ENCODE measurements at regions of chr22 and their contacts with region 1.

Region 1: GRCh38 chr22:37316875-37317371 is 34.6 kb downstream of the CYTH4 start:
- DNase-seq: peak; percentile 51
- H3K4me3 Mint-ChIP-seq: no peak overlapping the region
- H3K27ac Mint-ChIP-seq: no peak overlapping the region
- H3K4me1 Mint-ChIP-seq: peaks cover 45% of the 10 kb centered on the region
- H3K27me3 Mint-ChIP-seq: peaks cover 17% of the 10 kb centered on the region

Region 2: GRCh38 chr22:36757668-36758211 is 559.2 kb before region 1 on chr22:
- intact Hi-C with region 1: no loop called
- DNase-seq: peak; percentile 63
- H3K4me3 Mint-ChIP-seq: no peak overlapping the region
- H3K27ac Mint-ChIP-seq: no peak overlapping the region
- H3K4me1 Mint-ChIP-seq: no peaks in the 10 kb centered on the region
- H3K27me3 Mint-ChIP-seq: peaks cover 8% of the 10 kb centered on the region

Region 3: GRCh38 chr22:36966851-36967540 is 349.9 kb before region 1 on chr22:
- intact Hi-C with region 1: no loop called
- DNase-seq: no peak
- H3K4me3 Mint-ChIP-seq: no peak overlapping the region
- H3K27ac Mint-ChIP-seq: no peak overlapping the region
- H3K4me1 Mint-ChIP-seq: no peaks in the 10 kb centered on the region
- H3K27me3 Mint-ChIP-seq: peaks cover 14% of the 10 kb centered on the region

Region 4: GRCh38 chr22:37098976-37099591 is 217.8 kb before region 1 on chr22:
- intact Hi-C with region 1: no loop called
- DNase-seq: no peak
- H3K4me3 Mint-ChIP-seq: no peak overlapping the region
- H3K27ac Mint-ChIP-seq: no peak overlapping the region
- H3K4me1 Mint-ChIP-seq: peaks cover 52% of the 10 kb centered on the region
- H3K27me3 Mint-ChIP-seq: peaks cover 6% of the 10 kb centered on the region

Region 5: GRCh38 chr22:37267135-37267587 is 49.8 kb before region 1 on chr22:
- intact Hi-C with region 1: loop called (anchors 1 kb)
- DNase-seq: peak; percentile 74
- H3K4me3 Mint-ChIP-seq: peak overlapping the region; percentile 86
- H3K27ac Mint-ChIP-seq: peak overlapping the region; percentile 96
- H3K4me1 Mint-ChIP-seq: peaks cover 24% of the 10 kb centered on the region
- H3K27me3 Mint-ChIP-seq: peaks cover 4% of the 10 kb centered on the region

Region 6: DNA sequence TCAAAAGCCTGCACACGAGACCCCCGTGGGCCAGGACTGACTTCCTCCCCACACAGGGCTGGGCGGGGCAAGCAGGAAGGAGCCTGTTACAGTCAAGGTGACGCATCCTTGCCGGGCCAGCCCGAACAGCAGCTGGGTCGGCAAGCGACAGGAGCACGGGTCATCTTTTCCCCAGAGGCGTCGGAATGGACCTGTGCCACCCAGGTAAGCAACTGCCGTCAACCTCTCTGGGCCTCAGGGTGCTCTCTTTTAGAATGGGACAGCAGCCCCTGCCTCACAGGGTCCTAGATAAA is 34.6 kb before region 1 on chr22 and contains the start of gene CYTH4:
- intact Hi-C with region 1: loop called (anchors 1 kb)
- DNase-seq: peak; percentile 74
- H3K4me3 Mint-ChIP-seq: peak within 1 kb of the TSS; percentile 88
- H3K27ac Mint-ChIP-seq: peak within 1 kb of the TSS; percentile 99
- H3K4me1 Mint-ChIP-seq: peaks cover 65% of the 10 kb centered on the region
- H3K27me3 Mint-ChIP-seq: no peaks in the 10 kb centered on the region
- total RNA-seq, gene CYTH4: 49.5 and 57.1 TPM in 2 replicates

Region 7: DNA sequence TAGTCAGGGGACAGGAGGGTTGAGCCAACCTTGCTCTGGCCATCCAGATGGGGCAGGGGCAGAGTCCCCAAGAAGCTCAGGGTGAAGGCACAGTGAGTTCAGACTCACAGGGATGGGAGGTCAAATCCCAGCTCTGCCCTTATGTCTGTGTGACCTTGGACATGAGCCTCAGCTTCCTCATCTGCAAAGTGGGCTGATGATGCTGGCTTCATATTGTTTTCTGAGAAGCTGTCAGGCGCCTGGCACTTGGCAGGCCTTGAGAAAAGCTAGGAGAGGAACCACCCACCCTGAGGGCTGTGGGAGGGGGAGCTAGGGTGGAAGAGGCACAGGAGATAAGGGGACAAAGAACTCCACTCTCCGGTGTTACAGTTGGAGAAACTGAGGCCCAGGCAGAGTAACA is 11.0 kb before region 1 on chr22:
- intact Hi-C with region 1: loop called (anchors 1 kb)
- DNase-seq: no peak
- H3K4me3 Mint-ChIP-seq: no peak overlapping the region
- H3K27ac Mint-ChIP-seq: peak overlapping the region; percentile 100
- H3K4me1 Mint-ChIP-seq: peaks cover 83% of the 10 kb centered on the region
- H3K27me3 Mint-ChIP-seq: no peaks in the 10 kb centered on the region

Region 8: DNA sequence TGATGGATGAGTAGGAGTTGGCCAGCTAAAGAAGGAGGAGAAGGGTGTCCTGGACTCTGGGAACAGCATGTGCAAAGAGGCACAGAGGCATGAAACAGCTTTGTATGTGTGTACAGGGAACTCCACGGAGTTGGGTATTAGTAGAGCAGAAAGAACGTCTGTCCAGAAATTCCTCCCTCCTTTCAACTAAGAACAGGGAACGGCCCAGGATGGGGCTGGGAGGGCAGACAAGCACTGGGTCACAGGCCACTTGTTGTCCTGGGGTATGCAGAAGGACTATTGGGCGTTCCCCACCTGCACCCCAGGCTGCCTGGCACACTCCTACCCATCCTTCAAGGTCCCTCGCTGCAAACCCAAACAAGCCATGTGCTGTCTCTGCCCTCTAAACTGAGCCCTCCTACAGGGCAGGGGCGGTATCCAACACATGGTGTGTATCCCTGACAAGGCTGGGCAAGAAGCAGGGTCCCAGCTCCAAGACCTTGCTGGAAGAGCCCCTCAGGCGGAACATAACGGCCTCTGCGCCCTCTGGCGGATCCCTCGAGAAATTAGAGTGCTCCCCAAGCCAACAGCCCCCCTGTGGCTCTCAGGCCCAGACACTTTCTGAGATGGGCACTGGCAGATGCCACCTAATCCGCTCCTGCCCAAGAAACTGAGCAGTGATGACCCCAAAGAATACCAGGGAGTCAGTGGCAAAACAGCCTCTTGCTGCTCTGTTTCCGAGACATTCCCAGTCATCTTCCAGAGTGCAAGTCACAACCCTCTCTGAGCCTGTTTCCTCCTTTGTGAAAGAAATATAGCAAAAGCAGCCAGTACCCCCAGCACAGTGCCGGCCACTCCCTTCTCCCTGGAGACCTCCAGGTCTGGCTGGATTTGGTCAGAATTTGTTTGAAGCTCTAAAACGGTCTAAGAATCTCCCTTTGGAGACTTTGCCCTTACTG is 112.0 kb after region 1 on chr22:
- intact Hi-C with region 1: loop called (anchors 1 kb)
- DNase-seq: peak; percentile 28
- H3K4me3 Mint-ChIP-seq: no peak overlapping the region
- H3K27ac Mint-ChIP-seq: no peak overlapping the region
- H3K4me1 Mint-ChIP-seq: peaks cover 24% of the 10 kb centered on the region
- H3K27me3 Mint-ChIP-seq: peaks cover 42% of the 10 kb centered on the region

Region 9: GRCh38 chr22:37457093-37457893 is 140.4 kb after region 1 on chr22:
- intact Hi-C with region 1: loop called (anchors 1 kb)
- DNase-seq: peak; percentile 75
- H3K4me3 Mint-ChIP-seq: no peak overlapping the region
- H3K27ac Mint-ChIP-seq: no peak overlapping the region
- H3K4me1 Mint-ChIP-seq: peaks cover 18% of the 10 kb centered on the region
- H3K27me3 Mint-ChIP-seq: no peaks in the 10 kb centered on the region